ENCODE measurements at regions of chr10 and their contacts with region 1.

Region 1: DNA sequence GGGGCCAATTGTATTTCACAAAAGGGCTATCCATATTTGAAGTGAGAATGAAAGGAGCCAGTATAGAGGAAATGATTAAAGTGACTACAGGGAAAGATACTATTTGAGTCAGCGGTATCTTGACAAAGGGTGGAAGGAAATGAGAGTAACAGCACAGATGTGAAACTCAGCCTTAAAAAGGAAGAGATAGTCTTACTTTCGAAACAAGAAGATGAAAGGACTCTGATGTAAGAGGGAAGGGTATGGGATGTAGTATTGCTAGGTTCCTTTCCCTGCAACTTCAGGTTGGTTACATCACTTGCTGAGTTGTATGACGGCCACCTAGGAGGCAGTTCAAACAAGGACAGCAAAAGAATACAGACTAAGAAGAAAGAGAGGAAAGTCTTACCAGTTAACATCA is 13.7 kb downstream of the CISD1 start:
- DNase-seq: peak; percentile 45
- H3K4me3 Mint-ChIP-seq: peak overlapping the region; percentile 33
- H3K27ac Mint-ChIP-seq: peak overlapping the region; percentile 65
- H3K4me1 Mint-ChIP-seq: peaks cover 38% of the 10 kb centered on the region
- H3K27me3 Mint-ChIP-seq: no peaks in the 10 kb centered on the region

Region 2: GRCh38 chr10:58177362-58177947 is 105.2 kb before region 1 on chr10:
- CTCF ChIA-PET with region 1: no interaction called
- POLR2A ChIA-PET with region 1: no interaction called
- intact Hi-C with region 1: loop called (anchors 2 kb)
- DNase-seq: no peak
- H3K4me3 Mint-ChIP-seq: no peak overlapping the region
- H3K27ac Mint-ChIP-seq: no peak overlapping the region
- H3K4me1 Mint-ChIP-seq: no peaks in the 10 kb centered on the region
- H3K27me3 Mint-ChIP-seq: no peaks in the 10 kb centered on the region

Region 3: DNA sequence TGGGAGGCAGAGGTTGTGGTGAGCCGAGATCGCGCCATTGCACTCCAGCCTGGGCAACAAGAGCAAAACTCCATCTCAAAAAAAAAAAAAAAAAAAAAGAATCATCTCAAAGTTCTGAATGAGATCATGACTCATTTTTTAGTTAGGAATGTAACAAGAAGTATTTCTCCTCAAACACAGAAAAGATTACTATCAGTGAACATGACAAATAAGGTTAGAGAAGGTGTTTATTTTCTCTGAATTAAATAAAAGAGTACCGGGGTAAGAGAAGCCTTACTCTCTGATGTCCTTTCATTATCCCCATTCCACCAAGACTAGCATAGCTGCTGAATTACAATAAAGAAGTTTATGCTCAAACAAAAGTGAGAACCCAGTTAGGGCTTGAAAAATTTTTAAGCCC is 65.0 kb before region 1 on chr10:
- CTCF ChIA-PET with region 1: no interaction called
- POLR2A ChIA-PET with region 1: no interaction called
- intact Hi-C with region 1: no loop called
- DNase-seq: no peak
- H3K4me3 Mint-ChIP-seq: no peak overlapping the region
- H3K27ac Mint-ChIP-seq: no peak overlapping the region
- H3K4me1 Mint-ChIP-seq: peaks cover 2% of the 10 kb centered on the region
- H3K27me3 Mint-ChIP-seq: no peaks in the 10 kb centered on the region

Region 4: GRCh38 chr10:58268870-58269605 is 13.6 kb before region 1 on chr10 and contains the start of gene CISD1:
- CTCF ChIA-PET with region 1: interaction called, 5 read pairs
- POLR2A ChIA-PET with region 1: interaction called, 3 read pairs
- intact Hi-C with region 1: loop called (anchors 1 kb)
- DNase-seq: peak; percentile 96
- H3K4me3 Mint-ChIP-seq: peak within 1 kb of the TSS; percentile 84
- H3K27ac Mint-ChIP-seq: peak within 1 kb of the TSS; percentile 94
- H3K4me1 Mint-ChIP-seq: peaks cover 24% of the 10 kb centered on the region
- H3K27me3 Mint-ChIP-seq: no peaks in the 10 kb centered on the region
- total RNA-seq, gene CISD1: 42.3 to 44.0 TPM

Region 5: GRCh38 chr10:58384999-58385783 is 102.6 kb after region 1 on chr10 and contains the start of gene TFAM:
- CTCF ChIA-PET with region 1: no interaction called
- POLR2A ChIA-PET with region 1: interaction called, 3 read pairs
- intact Hi-C with region 1: loop called (anchors 1 kb)
- DNase-seq: peak; percentile 99
- H3K4me3 Mint-ChIP-seq: peak within 1 kb of the TSS; percentile 99
- H3K27ac Mint-ChIP-seq: peak within 1 kb of the TSS; percentile 92
- H3K4me1 Mint-ChIP-seq: peaks cover 37% of the 10 kb centered on the region
- H3K27me3 Mint-ChIP-seq: no peaks in the 10 kb centered on the region
- total RNA-seq, gene TFAM: 85.4 to 92.5 TPM

Region 6: GRCh38 chr10:59885430-59886134 is 1603.0 kb after region 1 on chr10:
- CTCF ChIA-PET with region 1: no interaction called
- POLR2A ChIA-PET with region 1: no interaction called
- intact Hi-C with region 1: loop called (anchors 5 kb)
- DNase-seq: peak; percentile 44
- H3K4me3 Mint-ChIP-seq: no peak overlapping the region
- H3K27ac Mint-ChIP-seq: peak overlapping the region; percentile 96
- H3K4me1 Mint-ChIP-seq: peaks cover 87% of the 10 kb centered on the region
- H3K27me3 Mint-ChIP-seq: no peaks in the 10 kb centered on the region

Measured in activated CD4-positive, alpha-beta memory T cell treated with anti-CD3 and anti-CD28 coated beads for 36 hours (primary cell).